ENCODE measurements at regions of chr3 and their contacts with region 1.

Region 1: DNA sequence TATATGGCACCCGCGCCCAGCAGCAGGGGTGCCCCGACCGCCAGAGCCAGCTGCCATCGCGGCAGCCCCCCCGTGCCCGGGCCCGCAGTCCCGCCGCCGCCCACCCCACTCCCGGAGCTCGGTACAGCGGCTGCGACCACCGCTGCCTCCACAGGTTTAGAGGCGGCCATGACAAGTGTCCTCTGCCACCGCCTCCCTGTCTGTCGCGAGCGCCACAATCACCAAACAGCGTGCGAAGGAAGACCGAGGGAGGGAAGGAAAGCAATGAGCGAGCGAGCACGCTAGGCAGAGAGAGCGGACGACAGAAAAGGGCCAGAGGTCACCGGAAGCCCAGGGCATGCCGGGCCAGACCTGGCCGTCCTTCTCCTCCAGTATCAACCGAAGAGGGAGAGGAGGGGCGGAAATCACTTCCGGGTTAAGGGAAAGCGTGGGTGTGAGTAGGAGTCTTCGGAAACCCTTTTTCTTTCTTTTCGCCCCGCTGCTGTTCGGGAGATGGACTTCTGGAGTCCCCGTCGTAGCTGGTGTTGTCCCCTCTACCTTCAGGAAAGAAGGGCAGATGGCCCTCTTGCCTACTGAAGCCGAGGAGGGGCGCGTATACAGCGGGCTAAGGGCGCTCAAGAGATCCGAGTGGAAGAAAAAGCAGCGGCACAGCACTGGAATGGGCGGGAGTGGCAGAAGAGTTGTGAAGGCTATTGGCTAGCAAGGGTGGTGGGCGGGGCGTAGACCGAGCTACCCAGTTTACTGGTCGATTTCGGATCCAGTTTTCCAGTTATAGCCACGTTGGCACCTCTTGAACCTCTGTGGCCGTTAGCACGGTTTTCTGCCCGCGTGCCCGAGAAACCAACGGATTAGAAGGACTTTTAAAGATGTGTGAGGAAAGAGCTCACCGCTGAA is at the starts of genes LNP1 and TOMM70:
- DNase-seq: peak; percentile 96
- H3K4me3 ChIP-seq: peak within 1 kb of the TSS; percentile 52 to 95 (median 90)
- H3K27ac ChIP-seq: peak within 1 kb of the TSS; percentile 78
- H3K4me1 ChIP-seq: peaks cover 19% of the 10 kb centered on the region
- H3K27me3 ChIP-seq: no peaks in the 10 kb centered on the region
- CTCF ChIP-seq: no peak
- total RNA-seq, gene LNP1: 1.5 to 1.7 TPM
- total RNA-seq, gene TOMM70: 43.5 to 43.7 TPM

Region 2: GRCh38 chr3:99817437-99818240 is 583.4 kb before region 1 on chr3 and contains the start of gene CMSS1:
- CTCF ChIA-PET with region 1: no interaction called
- dilution Hi-C with region 1: no loop called
- in situ Hi-C with region 1: no loop called
- intact Hi-C with region 1: loop called (anchors 5 kb)
- DNase-seq: peak; percentile 90
- H3K4me3 ChIP-seq: peak within 1 kb of the TSS; percentile 63 to 79 (median 79)
- H3K27ac ChIP-seq: peak within 1 kb of the TSS; percentile 97
- H3K4me1 ChIP-seq: peaks cover 6% of the 10 kb centered on the region
- H3K27me3 ChIP-seq: no peaks in the 10 kb centered on the region
- CTCF ChIP-seq: peak in 1 of 2 donors; percentile 2
- total RNA-seq, gene CMSS1: 20.8 to 55.3 TPM

Region 3: GRCh38 chr3:100425316-100425715 is 24.3 kb after region 1 on chr3:
- CTCF ChIA-PET with region 1: no interaction called
- dilution Hi-C with region 1: no loop called
- in situ Hi-C with region 1: no loop called
- intact Hi-C with region 1: loop called (anchors 2 kb)
- DNase-seq: peak; percentile 75
- H3K4me3 ChIP-seq: no peak overlapping the region
- H3K27ac ChIP-seq: no peak overlapping the region
- H3K4me1 ChIP-seq: peaks cover 16% of the 10 kb centered on the region
- H3K27me3 ChIP-seq: no peaks in the 10 kb centered on the region
- CTCF ChIP-seq: no peak

Region 4: DNA sequence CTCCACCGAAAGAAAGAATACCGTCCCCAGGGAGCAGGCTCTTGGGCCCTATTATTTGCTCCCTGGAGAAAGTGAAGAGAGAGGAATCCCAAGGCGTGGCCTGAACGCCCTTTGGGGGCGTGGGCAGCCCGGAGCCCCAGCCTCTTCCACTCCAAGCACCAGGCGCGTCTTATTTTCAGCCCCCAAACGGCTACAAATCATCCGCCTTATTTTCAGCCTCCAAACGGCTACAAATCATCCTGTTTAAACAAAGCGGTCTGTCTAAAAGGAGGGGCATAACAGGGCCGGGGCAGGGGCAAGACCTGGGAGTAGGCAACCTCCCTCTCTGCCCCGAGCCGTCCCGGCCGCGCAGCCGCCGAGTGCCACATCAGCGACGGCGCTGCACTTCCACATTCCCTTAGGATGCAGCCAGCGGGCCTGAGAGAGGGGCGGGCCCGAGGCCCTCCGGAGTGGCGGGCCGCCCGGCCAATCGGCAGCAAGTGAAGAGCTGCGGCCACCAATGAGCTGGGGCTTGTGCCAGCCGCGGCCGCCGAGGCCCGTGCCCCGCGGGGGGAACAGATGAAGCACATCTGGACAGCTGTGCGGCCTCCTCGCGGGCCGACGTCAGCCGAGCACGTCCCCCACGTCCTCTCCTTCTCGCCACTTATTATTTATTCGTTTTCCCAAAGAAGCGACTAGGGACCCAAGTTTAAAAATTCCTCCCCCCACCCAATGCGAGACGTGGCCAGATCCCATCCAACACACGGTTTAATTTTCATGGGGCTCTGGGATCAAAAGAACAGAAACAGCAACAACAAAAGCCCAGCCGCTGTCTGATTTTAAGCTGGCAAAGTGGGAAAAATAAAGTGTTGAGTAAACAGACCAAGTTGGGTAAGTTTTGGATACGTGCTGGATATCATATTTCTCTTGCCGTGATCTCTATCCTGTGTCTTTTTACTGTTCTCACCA is 91.3 kb after region 1 on chr3 and contains the start of gene TMEM45A:
- CTCF ChIA-PET with region 1: no interaction called
- dilution Hi-C with region 1: no loop called
- in situ Hi-C with region 1: no loop called
- intact Hi-C with region 1: loop called (anchors 5 kb)
- DNase-seq: peak; percentile 94
- H3K4me3 ChIP-seq: peak within 1 kb of the TSS; percentile 57 to 96 (median 70)
- H3K27ac ChIP-seq: peak within 1 kb of the TSS; percentile 81
- H3K4me1 ChIP-seq: peaks cover 22% of the 10 kb centered on the region
- H3K27me3 ChIP-seq: no peaks in the 10 kb centered on the region
- CTCF ChIP-seq: no peak
- total RNA-seq, gene TMEM45A: 22.4 to 39.2 TPM

Region 5: GRCh38 chr3:100603469-100603868 is 202.4 kb after region 1 on chr3:
- CTCF ChIA-PET with region 1: no interaction called
- dilution Hi-C with region 1: no loop called
- in situ Hi-C with region 1: no loop called
- intact Hi-C with region 1: loop called (anchors 5 kb)
- DNase-seq: peak; percentile 73
- H3K4me3 ChIP-seq: no peak overlapping the region
- H3K27ac ChIP-seq: peak overlapping the region; percentile 91
- H3K4me1 ChIP-seq: peaks cover 43% of the 10 kb centered on the region
- H3K27me3 ChIP-seq: no peaks in the 10 kb centered on the region
- CTCF ChIP-seq: peak; percentile 71 to 77

Measured in mammary epithelial cell (primary cell).